Calu3 (cell line): ENCODE measurements at regions of chr2 and their contacts with region 1.

Region 1: DNA sequence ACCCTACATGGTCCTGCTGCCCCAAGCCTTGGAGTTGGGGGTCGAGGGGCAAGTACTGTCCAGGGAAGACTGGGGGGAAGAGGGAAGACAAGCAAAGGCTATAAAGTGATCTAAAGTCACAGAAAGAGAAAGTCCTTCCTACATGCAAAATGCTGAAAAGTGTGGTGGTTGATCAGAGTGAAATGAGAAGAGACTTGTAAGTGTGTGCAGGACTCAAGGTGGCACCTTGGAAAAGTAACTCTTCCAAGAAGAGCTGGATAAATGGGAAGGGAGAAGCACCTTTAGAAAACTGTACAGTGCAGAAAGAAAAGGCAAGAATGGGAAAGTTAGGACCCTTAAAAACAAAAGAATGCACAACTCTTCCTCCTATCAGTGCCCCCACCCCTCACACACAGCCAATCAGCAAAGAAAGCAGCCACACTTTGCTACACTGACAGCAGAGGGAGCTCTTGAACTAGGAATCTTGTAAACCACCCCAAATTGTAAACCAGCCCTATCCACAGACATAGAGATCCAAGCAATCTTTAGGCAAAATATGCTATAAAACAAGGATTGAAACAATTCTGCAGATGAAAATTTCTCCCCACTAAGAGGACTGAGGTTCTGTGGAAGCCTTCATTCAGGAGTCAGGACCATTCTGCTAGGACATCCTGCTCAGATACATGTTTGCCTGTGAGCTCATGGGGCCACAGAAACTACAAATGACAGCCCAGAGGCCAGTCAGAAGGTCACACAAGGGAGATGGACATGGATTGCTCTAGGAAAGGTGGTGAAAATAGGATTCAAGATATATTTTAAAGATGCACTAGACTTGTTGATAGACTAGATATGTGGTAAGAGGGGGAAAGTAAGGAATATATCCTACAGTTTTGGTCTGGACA is 146.4 kb downstream of the FTCDNL1 start:
- DNase-seq: peak; percentile 61
- H3K4me3 Mint-ChIP-seq: no peak overlapping the region
- H3K27ac Mint-ChIP-seq: no peak overlapping the region
- H3K4me1 Mint-ChIP-seq: no peaks in the 10 kb centered on the region
- H3K27me3 Mint-ChIP-seq: peaks cover 7% of the 10 kb centered on the region
- CTCF ChIP-seq: peak; percentile 78

Region 2: GRCh38 chr2:199739413-199740110 is 35.0 kb after region 1 on chr2:
- CTCF ChIA-PET with region 1: interaction called, 16 read pairs
- intact Hi-C with region 1: loop called (anchors 1 kb)
- DNase-seq: peak; percentile 75
- H3K4me3 Mint-ChIP-seq: no peak overlapping the region
- H3K27ac Mint-ChIP-seq: no peak overlapping the region
- H3K4me1 Mint-ChIP-seq: peaks cover 16% of the 10 kb centered on the region
- H3K27me3 Mint-ChIP-seq: peaks cover 25% of the 10 kb centered on the region
- CTCF ChIP-seq: peak; percentile 94

Region 3: GRCh38 chr2:199940373-199940772 is 235.8 kb after region 1 on chr2:
- CTCF ChIA-PET with region 1: interaction called, 4 read pairs
- intact Hi-C with region 1: loop called (anchors 1 kb)
- DNase-seq: no peak
- H3K4me3 Mint-ChIP-seq: no peak overlapping the region
- H3K27ac Mint-ChIP-seq: no peak overlapping the region
- H3K4me1 Mint-ChIP-seq: no peaks in the 10 kb centered on the region
- H3K27me3 Mint-ChIP-seq: no peaks in the 10 kb centered on the region
- CTCF ChIP-seq: no peak